Activated CD4-positive, alpha-beta memory T cell treated with anti-CD3 and anti-CD28 coated beads for 36 hours (primary cell): ENCODE measurements at regions of chr11 and their contacts with region 1.

Region 1: DNA sequence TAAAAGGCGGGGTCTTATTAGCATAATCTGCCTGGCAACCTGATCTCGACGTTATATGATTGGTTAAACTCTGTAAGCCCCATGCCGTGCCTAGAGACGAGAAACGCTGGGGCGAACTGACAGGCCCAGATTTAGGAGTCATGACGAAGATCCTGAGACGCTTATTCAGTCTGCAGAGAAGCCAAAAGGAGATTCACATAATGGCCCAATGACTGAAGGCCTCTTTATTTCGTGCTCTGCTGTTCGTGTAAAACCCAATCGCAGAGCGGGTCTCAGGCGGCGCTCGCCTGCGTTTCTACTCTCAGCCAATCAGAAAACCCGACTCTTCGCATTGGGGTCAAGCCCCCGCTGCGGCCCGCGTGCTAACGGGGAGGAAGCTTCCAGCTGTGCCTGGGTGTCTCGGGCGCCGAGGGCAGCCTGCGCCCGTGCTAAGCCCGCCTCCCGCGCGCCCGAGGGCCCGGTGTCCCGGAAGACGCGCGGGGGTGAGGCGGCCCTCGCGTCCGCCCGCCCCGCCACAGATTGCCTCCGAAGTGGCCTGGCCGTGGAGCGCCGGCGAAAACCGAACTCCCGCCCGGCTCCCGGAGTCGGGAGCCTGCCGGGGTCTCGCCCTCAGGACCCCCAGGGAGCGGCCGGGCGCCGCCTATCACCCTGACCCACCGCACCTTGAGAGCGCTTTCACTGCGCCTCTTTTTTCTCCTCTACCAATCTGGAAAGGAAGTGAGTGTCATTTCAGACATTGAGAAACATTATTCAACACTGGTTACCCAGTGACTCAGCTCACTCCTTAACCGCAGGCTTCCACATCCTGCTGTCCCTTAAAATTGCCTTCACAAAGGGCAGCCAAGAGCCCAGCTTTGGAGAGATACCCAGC is 446 bp upstream of the PRDM10 start:
- DNase-seq: peak; percentile 91
- H3K4me3 Mint-ChIP-seq: peak overlapping the region; percentile 94
- H3K27ac Mint-ChIP-seq: peak overlapping the region; percentile 100
- H3K4me1 Mint-ChIP-seq: peaks cover 32% of the 10 kb centered on the region
- H3K27me3 Mint-ChIP-seq: no peaks in the 10 kb centered on the region

Region 2: GRCh38 chr11:129895126-129896041 is 107.7 kb before region 1 on chr11 and contains the start of gene NFRKB:
- CTCF ChIA-PET with region 1: no interaction called
- POLR2A ChIA-PET with region 1: interaction called, 6 read pairs
- intact Hi-C with region 1: loop called (anchors 1 kb)
- DNase-seq: peak; percentile 91
- H3K4me3 Mint-ChIP-seq: peak within 1 kb of the TSS; percentile 88
- H3K27ac Mint-ChIP-seq: peak within 1 kb of the TSS; percentile 76
- H3K4me1 Mint-ChIP-seq: peaks cover 38% of the 10 kb centered on the region
- H3K27me3 Mint-ChIP-seq: no peaks in the 10 kb centered on the region
- total RNA-seq, gene NFRKB: 34.8 to 39.8 TPM

Region 3: DNA sequence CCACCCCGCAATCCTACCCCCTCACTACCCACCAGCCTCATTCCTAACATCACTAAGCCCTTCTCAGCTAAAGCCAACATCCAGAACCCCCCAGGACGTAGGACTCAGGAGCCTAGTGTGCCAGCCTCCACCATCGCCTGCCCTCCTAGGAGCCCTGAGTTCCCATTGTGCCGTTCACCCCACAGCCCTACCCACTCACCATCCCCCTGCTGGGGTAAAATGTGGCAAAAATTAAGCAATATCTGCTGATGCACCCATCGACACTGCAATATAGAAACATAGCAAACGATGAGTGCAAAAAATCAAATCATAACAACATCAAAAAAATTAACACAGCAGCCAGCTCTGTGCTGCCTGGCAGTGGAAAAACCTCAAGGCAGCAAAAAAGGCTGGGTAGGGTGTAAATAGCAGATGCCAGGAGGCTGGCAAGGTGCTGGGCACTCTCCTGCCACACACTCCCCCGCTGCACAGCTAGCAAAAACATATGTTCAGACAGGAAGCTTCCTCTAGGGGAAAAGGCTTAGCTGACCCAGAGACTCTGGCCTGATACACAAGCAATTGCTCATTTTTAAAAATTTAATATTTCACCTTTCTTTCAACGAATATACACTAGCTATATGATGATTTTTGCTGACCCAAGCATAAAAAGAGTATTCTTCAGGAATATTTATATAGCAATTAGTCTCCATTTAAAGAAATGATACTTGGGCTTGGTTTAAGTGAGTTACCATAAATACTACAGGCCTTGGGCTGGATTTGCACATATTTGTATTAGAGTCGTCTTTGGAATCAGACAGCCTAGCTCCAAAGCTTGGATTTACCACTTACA is 34.3 kb before region 1 on chr11:
- CTCF ChIA-PET with region 1: no interaction called
- POLR2A ChIA-PET with region 1: interaction called, 3 read pairs
- intact Hi-C with region 1: loop called (anchors 1 kb)
- DNase-seq: no peak
- H3K4me3 Mint-ChIP-seq: no peak overlapping the region
- H3K27ac Mint-ChIP-seq: no peak overlapping the region
- H3K4me1 Mint-ChIP-seq: peaks cover 7% of the 10 kb centered on the region
- H3K27me3 Mint-ChIP-seq: no peaks in the 10 kb centered on the region

Region 4: GRCh38 chr11:130124096-130124495 is 121.0 kb after region 1 on chr11:
- CTCF ChIA-PET with region 1: interaction called, 3 read pairs
- POLR2A ChIA-PET with region 1: interaction called, 3 read pairs
- intact Hi-C with region 1: loop called (anchors 1 kb)
- DNase-seq: no peak
- H3K4me3 Mint-ChIP-seq: no peak overlapping the region
- H3K27ac Mint-ChIP-seq: no peak overlapping the region
- H3K4me1 Mint-ChIP-seq: peaks cover 29% of the 10 kb centered on the region
- H3K27me3 Mint-ChIP-seq: peaks cover under 1% of the 10 kb centered on the region

Region 5: DNA sequence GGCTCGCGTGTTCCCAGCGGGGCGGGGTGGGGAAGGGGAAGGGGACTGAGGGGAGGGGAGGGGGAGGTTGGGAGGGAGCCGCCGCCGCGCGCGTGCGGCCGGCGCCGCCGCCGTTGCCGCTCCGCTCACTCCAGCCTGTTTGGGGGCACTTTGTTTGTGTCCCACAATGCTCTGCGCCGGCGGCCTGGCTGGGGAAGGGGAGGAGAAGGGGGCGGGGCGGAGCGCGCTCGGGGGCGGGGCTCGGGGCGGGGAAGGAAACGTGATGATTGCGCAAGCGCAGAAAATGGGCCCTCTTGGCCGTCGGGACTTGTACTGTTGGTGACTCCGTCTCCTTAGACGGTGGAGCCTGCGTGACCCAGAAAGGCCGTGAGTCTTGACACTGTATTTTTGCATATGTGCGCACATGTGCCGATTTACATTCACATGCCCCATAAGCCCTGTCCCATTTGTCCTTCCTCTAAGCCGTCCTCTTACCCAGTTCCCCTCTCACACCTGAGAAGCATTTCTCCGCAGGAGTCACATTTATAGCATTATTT is 311.7 kb after region 1 on chr11 and contains the start of gene ZBTB44:
- CTCF ChIA-PET with region 1: no interaction called
- POLR2A ChIA-PET with region 1: no interaction called
- intact Hi-C with region 1: loop called (anchors 1 kb)
- DNase-seq: peak; percentile 94
- H3K4me3 Mint-ChIP-seq: peak within 1 kb of the TSS; percentile 90
- H3K27ac Mint-ChIP-seq: peak within 1 kb of the TSS; percentile 97
- H3K4me1 Mint-ChIP-seq: peaks cover 32% of the 10 kb centered on the region
- H3K27me3 Mint-ChIP-seq: no peaks in the 10 kb centered on the region
- total RNA-seq, gene ZBTB44: 33.3 to 33.4 TPM